CD8-positive, alpha-beta T cell (primary cell): ENCODE measurements at regions of chr17 and their contacts with region 1.

Region 1: DNA sequence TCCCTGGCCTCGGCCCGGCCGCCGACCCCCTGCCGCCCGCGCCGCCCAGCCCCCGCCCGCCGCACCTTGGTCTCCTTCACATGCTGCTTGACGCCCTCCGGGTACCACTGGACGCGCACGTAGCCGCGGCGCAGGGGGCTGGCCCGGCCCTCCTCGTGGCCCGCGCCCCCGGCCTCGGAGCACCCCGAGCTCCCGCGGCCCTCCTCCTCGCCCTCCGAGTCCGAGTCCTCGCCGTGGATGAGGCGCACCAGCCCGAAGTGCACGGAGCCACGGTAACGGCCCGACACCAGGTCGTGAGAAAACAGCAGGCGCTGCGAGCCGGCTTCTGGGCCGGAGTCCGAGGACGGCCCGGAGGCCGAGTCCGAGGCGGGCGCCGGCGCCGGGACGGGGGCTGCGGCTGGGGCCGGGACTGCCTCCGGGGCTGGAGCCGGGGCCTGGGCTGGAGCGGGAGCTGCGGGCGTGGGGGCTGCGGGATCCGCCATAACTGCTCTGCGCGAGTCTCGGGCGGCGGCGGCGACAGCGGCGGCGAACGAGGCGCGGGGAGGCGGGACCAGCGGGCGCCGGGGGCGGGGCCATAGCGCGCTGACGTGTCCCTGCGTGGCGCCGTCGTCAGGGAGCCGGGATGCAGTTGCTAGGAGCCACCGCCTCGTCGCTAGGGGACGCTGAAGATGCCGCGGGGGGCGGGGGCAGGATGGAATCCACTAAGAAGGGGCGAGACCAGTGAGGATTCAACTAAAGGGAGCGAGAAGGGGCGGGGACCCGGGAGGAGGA is at the start of gene UBE2O:
- DNase-seq: peak; percentile 84 to 96 (median 94)
- ATAC-seq: peak; percentile 92
- H3K4me3 ChIP-seq: peak within 1 kb of the TSS; percentile 49 to 78
- H3K4me3 Mint-ChIP-seq: peak within 1 kb of the TSS; percentile 85
- H3K27ac ChIP-seq: peak within 1 kb of the TSS; percentile 50 to 64
- H3K27ac Mint-ChIP-seq: peak within 1 kb of the TSS; percentile 78
- H3K4me1 ChIP-seq: peaks cover 22% of the 10 kb centered on the region
- H3K4me1 Mint-ChIP-seq: peaks cover 39% of the 10 kb centered on the region
- H3K27me3 ChIP-seq: no peaks in the 10 kb centered on the region
- H3K27me3 Mint-ChIP-seq: no peaks in the 10 kb centered on the region
- CTCF ChIP-seq: peak; percentile 39
- total RNA-seq, gene UBE2O: 29.8 to 32.7 TPM

Region 2: DNA sequence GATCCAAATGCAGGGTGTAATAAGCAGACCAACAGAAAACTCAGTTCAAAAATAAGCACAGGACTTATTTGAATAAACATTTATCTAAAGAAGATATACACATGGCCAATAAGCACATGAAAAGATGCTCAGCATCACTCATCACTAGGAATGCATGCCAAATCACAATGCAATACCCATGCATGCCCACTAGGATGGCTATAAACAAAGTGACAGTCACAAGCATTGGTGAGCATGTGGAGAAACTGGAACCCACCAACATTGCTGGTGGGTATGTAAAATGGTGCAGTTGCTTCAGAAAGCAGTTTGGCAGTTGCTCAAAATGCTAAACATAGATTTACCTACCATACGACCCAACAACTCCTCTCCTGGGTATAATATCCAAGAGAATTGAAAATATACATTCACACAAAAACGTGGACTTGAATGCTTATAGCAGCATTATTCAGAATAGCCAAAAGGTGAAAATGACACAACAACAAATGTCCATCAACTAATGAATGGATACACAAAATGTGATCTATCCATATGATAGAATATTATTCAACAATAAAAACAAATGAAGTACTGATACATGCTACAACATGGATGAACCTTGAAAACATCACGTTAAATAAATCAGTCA is 20.0 kb before region 1 on chr17:
- CTCF ChIA-PET with region 1: no interaction called
- POLR2A ChIA-PET with region 1: no interaction called
- intact Hi-C with region 1: no loop called
- DNase-seq: peak in 1 of 9 experiments; percentile 29
- ATAC-seq: peak; percentile 54
- H3K4me3 ChIP-seq: no peak overlapping the region
- H3K4me3 Mint-ChIP-seq: no peak overlapping the region
- H3K27ac ChIP-seq: no peak overlapping the region
- H3K27ac Mint-ChIP-seq: no peak overlapping the region
- H3K4me1 ChIP-seq: no peaks in the 10 kb centered on the region
- H3K4me1 Mint-ChIP-seq: peaks cover 24% of the 10 kb centered on the region
- H3K27me3 ChIP-seq: no peaks in the 10 kb centered on the region
- H3K27me3 Mint-ChIP-seq: no peaks in the 10 kb centered on the region
- CTCF ChIP-seq: peak; percentile 53

Region 3: GRCh38 chr17:76501018-76501826 is 48.4 kb after region 1 on chr17 and contains the start of gene RHBDF2:
- CTCF ChIA-PET with region 1: interaction called, 31 read pairs
- POLR2A ChIA-PET with region 1: interaction called, 3 read pairs
- intact Hi-C with region 1: loop called (anchors 1 kb)
- DNase-seq: peak; percentile 91 to 99 (median 96)
- ATAC-seq: peak; percentile 97
- H3K4me3 ChIP-seq: peak within 1 kb of the TSS; percentile 79 to 93
- H3K4me3 Mint-ChIP-seq: peak within 1 kb of the TSS; percentile 83
- H3K27ac ChIP-seq: peak within 1 kb of the TSS; percentile 73 to 85
- H3K27ac Mint-ChIP-seq: peak within 1 kb of the TSS; percentile 96
- H3K4me1 ChIP-seq: peaks cover 44% of the 10 kb centered on the region
- H3K4me1 Mint-ChIP-seq: peaks cover 47% of the 10 kb centered on the region
- H3K27me3 ChIP-seq: no peaks in the 10 kb centered on the region
- H3K27me3 Mint-ChIP-seq: no peaks in the 10 kb centered on the region
- CTCF ChIP-seq: no peak
- total RNA-seq, gene RHBDF2: 45.4 to 46.2 TPM

Region 4: DNA sequence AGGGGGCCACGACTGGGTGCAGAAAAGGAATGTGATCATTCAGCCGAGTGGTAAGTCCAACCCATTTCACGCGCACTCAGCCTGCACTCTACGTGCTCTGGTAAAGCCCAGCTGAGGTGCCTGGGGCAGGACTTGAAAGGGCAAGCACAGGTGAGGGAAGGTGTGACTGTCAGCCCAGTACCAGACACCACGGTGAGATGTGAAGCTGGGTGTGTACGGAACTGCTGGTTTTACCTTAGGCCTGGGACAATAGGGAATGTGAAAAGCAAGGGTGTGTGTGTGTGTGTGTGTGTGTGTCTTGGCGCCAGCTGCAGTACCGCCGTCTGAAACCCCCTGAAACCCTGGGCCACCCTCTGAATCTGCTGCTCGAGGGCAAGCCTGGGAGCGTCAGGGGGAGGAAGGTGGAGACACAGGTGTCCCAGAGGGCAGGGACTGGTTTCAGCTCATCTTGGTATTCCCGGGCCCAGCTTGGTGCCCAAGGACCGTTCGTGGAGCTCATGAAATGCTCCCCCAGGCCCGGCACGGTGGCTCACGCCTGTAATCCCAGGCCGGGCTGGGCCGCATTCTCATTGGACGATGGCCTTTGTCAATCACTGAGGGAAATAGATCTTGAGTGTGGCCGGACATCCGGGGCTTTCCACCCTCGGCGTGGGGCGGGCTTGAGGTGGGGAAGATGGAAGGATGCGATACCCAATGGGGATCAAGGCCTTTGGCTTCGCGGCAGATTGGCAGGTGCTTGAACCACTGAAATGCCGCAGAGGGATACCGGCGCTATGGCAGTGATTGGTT is 218.5 kb after region 1 on chr17:
- CTCF ChIA-PET with region 1: no interaction called
- POLR2A ChIA-PET with region 1: no interaction called
- intact Hi-C with region 1: loop called in 1 of 2 experiments (anchors 1 kb)
- DNase-seq: peak; percentile 96 to 100 (median 99)
- ATAC-seq: peak; percentile 97
- H3K4me3 ChIP-seq: peak overlapping the region; percentile 76 to 79
- H3K4me3 Mint-ChIP-seq: peak overlapping the region; percentile 90
- H3K27ac ChIP-seq: peak overlapping the region; percentile 71 to 90
- H3K27ac Mint-ChIP-seq: peak overlapping the region; percentile 96
- H3K4me1 ChIP-seq: peaks cover 39% of the 10 kb centered on the region
- H3K4me1 Mint-ChIP-seq: peaks cover 49% of the 10 kb centered on the region
- H3K27me3 ChIP-seq: no peaks in the 10 kb centered on the region
- H3K27me3 Mint-ChIP-seq: no peaks in the 10 kb centered on the region
- CTCF ChIP-seq: no peak